Cardiac septum (tissue), 1 donor: ENCODE measurements at regions of chr7 and their contacts with region 1.

Region 1: DNA sequence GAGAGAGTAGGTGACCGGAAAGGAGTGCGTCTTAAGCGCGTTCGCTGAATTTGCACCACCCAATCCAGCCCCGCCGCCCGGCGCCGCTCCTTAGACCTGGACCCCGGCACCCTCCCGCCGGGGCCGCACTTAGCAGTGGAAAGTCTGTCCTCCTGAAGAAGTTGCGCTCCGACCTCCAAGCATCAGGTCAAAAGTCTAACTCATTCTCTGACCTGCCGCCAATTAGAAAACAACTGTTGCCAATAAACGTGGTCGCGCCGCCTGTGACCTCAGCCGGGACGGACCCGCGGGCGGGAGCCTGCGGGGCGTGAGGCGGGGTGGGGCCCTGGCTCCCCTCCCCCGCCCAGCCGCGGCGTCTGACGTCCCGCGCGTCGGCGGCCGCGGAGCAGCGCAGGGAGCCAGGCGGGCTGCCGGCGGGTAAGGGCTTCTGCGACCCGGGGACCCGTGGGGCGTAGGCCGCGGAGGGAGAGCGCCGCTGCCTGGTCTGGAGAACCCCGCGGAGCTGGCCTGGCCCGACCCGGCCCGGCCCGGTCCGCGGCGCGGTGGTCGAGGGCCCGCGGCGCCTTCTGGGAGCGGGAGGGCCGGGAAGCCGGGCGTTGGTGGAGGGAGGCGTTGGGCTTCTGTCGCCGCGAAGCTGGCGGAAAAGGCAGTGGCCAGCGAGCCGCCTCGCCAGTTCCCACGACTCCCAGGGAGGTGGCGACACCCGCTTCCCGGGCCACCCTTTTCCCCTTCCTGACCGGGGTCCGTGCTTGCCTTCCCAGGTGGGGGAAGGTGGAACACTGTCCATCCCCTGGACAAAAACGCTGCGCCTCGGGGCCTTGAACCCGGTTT is at the start of gene BCAP29:
- DNase-seq: peak; percentile 92
- total RNA-seq, gene BCAP29: 109 TPM

Region 2: GRCh38 chr7:107168233-107169119 is 411.6 kb before region 1 on chr7 and contains the start of gene HBP1:
- intact Hi-C with region 1: loop called (anchors 1 kb)
- DNase-seq: peak; percentile 98
- total RNA-seq, gene HBP1: 45.4 TPM

Region 3: DNA sequence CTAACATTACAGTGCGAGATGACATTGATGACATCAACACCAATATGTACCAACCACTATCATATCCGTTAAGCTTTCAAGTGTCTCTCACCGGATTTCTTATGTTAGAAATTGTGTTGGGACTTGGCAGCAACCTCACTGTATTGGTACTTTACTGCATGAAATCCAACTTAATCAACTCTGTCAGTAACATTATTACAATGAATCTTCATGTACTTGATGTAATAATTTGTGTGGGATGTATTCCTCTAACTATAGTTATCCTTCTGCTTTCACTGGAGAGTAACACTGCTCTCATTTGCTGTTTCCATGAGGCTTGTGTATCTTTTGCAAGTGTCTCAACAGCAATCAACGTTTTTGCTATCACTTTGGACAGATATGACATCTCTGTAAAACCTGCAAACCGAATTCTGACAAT is 106.0 kb before region 1 on chr7:
- intact Hi-C with region 1: loop called (anchors 2 kb)
- DNase-seq: no peak

Region 4: DNA sequence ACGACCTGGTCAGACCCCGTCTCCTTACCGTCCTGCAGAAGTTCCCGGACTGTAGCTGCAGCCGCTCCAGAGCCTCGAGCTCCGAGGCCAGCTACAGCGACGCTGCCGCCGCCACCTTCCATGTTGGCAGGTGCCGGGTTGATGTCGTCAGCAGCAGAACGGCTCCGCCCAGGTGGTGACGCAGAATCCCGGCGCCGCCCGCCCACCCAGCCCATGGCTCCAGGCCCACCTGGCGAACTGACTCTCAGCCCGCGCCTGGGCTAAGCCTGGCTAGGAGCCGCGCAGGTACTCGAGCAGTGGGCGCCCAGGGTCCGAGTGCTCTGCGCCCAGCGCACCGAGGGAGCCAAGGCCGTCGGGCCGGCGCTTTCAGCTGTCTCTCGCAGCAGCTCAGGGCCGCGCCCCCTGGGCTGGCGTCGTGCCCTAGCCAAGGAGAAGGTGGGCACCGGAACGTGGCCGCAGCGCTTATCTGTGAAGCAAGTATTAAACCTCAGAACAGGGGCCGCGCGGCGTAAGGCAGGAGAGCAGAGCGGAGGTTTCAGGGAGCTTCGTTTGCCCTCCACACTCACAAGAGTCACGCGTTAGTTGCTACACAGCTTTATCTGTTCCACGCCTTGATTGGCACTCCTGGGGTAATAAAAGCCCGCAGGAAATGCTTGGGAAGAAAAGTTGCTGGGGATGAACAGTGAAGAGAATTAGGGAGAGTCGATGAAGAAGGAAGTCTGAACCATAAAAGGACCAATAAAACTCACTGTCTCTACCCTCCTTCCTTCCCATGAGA is 16.1 kb before region 1 on chr7 and contains the starts of genes COG5 and DUS4L:
- intact Hi-C with region 1: loop called (anchors 2 kb)
- DNase-seq: peak; percentile 93
- total RNA-seq, gene COG5: 43.9 TPM
- total RNA-seq, gene DUS4L: 7.9 TPM

Region 5: GRCh38 chr7:107594961-107595737 is 15.0 kb after region 1 on chr7:
- intact Hi-C with region 1: loop called (anchors 2 kb)
- DNase-seq: no peak